ENCODE measurements at regions of chr10 and their contacts with region 1.

Region 1: GRCh38 chr10:26860443-26861204 is at the start of gene ABI1:
- DNase-seq: peak; percentile 94 to 99 (median 97)
- ATAC-seq: peak; percentile 91
- H3K4me3 ChIP-seq: peak within 1 kb of the TSS; percentile 74 to 98
- H3K4me3 Mint-ChIP-seq: peak within 1 kb of the TSS; percentile 95
- H3K27ac ChIP-seq: peak within 1 kb of the TSS; percentile 88 to 93
- H3K27ac Mint-ChIP-seq: peak within 1 kb of the TSS; percentile 97
- H3K4me1 ChIP-seq: peaks cover 30% of the 10 kb centered on the region
- H3K4me1 Mint-ChIP-seq: peaks cover 29% of the 10 kb centered on the region
- H3K27me3 ChIP-seq: peaks cover 0 to 2% of the 10 kb centered on the region in 2 experiments
- H3K27me3 Mint-ChIP-seq: peaks cover 3% of the 10 kb centered on the region
- CTCF ChIP-seq: no peak
- total RNA-seq, gene ABI1: 91.6 to 94.5 TPM

Region 2: DNA sequence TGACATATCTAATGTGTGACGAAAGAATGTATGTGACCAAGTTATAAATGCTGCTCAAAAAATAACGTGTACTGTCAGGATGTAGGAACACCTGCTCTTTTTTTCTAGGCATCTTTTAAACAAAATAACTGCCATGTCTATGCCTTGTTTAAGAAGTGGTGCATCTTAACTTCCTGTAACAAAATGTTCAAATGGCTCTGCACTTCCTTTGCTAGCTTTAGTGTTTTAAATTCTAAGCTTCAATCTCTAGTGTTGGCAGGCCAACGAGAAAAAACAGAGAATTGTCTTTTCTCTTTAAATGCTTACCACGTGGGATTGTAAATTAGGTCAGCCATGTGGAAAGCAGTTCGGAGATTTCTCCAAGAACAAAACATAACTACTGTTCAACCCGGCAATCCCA is 177.7 kb before region 1 on chr10:
- CTCF ChIA-PET with region 1: no interaction called
- POLR2A ChIA-PET with region 1: no interaction called
- intact Hi-C with region 1: loop called in 1 of 2 experiments (anchors 2 kb)
- DNase-seq: peak in 2 of 9 experiments; percentile 52 to 74
- ATAC-seq: peak; percentile 82
- H3K4me3 ChIP-seq: peak overlapping the region in 1 of 2 experiments; percentile 22
- H3K4me3 Mint-ChIP-seq: peak overlapping the region; percentile 35
- H3K27ac ChIP-seq: peak overlapping the region; percentile 56 to 61
- H3K27ac Mint-ChIP-seq: peak overlapping the region; percentile 92
- H3K4me1 ChIP-seq: peaks cover 36% of the 10 kb centered on the region
- H3K4me1 Mint-ChIP-seq: peaks cover 37% of the 10 kb centered on the region
- H3K27me3 ChIP-seq: no peaks in the 10 kb centered on the region
- H3K27me3 Mint-ChIP-seq: no peaks in the 10 kb centered on the region
- CTCF ChIP-seq: no peak

Region 3: DNA sequence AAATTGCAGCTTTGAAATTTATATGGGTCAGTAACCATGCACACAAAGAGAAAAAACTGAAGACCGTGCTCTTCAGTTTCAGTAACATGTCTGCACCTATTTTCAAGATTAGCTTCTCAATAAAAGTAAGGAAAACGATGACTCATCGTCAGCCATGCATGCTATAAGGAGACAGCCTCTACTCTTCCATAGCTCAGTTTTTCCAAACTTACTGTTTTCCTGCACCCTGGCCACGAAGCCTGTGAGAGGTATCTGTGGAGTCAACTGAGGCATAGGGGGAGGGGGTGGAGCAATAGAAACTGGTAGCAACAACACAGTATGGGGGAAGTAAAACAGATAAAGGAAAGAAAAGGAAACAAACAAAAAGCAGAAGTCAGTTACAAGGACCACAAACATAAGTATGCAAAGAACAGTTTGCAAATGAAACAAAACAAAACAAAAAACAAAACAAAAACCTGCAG is 105.2 kb before region 1 on chr10:
- CTCF ChIA-PET with region 1: no interaction called
- POLR2A ChIA-PET with region 1: interaction called, 3 read pairs
- intact Hi-C with region 1: loop called in 1 of 2 experiments (anchors 5 kb)
- DNase-seq: no peak
- ATAC-seq: no peak
- H3K4me3 ChIP-seq: no peak overlapping the region
- H3K4me3 Mint-ChIP-seq: no peak overlapping the region
- H3K27ac ChIP-seq: no peak overlapping the region
- H3K27ac Mint-ChIP-seq: peak overlapping the region; percentile 23
- H3K4me1 ChIP-seq: no peaks in the 10 kb centered on the region
- H3K4me1 Mint-ChIP-seq: peaks cover 2% of the 10 kb centered on the region
- H3K27me3 ChIP-seq: no peaks in the 10 kb centered on the region
- H3K27me3 Mint-ChIP-seq: no peaks in the 10 kb centered on the region
- CTCF ChIP-seq: no peak

Region 4: GRCh38 chr10:26846719-26847118 is 13.9 kb before region 1 on chr10:
- CTCF ChIA-PET with region 1: no interaction called
- POLR2A ChIA-PET with region 1: no interaction called
- intact Hi-C with region 1: loop called in 1 of 2 experiments (anchors 1 kb)
- DNase-seq: no peak
- ATAC-seq: no peak
- H3K4me3 ChIP-seq: no peak overlapping the region
- H3K4me3 Mint-ChIP-seq: peak overlapping the region; percentile 0
- H3K27ac ChIP-seq: no peak overlapping the region
- H3K27ac Mint-ChIP-seq: peak overlapping the region; percentile 25
- H3K4me1 ChIP-seq: peaks cover 39% of the 10 kb centered on the region
- H3K4me1 Mint-ChIP-seq: peaks cover 69% of the 10 kb centered on the region
- H3K27me3 ChIP-seq: no peaks in the 10 kb centered on the region
- H3K27me3 Mint-ChIP-seq: no peaks in the 10 kb centered on the region
- CTCF ChIP-seq: no peak

Region 5: DNA sequence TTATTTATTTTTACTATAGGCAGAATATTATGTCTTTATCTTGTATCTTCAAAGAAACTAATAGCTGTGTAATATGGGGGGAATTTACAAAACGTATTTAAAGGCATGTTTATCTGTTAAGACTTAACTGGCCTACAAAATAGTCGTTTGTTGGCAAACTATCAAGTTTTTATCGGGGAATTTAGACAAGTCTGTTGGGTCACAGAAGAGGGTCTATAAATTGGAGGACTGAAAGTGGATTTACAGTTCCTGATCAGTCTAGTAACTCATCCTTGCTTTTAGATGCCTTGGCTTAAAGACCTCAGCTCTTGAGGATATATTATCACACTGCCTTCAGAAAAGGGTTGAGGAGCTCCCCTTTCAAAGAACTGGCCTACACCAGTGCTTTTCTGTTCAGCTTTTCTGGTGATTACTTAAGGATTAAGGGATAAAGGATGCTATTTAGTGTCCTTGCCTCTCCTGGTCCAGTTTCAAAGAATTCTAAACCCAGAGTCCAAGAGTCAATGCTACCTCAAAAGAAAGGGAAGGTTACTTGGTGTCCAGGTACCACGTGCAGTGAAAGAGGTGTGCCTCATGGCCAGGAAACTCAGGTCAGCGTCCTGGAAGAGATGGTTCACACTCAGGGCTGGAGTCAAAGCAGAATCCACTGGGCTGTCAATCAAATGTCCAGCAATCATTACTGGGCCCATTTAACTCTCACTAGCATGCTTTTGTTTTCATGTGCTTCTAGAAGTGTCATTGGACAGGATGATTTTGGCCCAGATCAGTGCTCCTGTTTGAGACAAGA is 43.0 kb after region 1 on chr10:
- CTCF ChIA-PET with region 1: no interaction called
- POLR2A ChIA-PET with region 1: no interaction called
- intact Hi-C with region 1: no loop called
- DNase-seq: no peak
- ATAC-seq: no peak
- H3K4me3 ChIP-seq: no peak overlapping the region
- H3K4me3 Mint-ChIP-seq: no peak overlapping the region
- H3K27ac ChIP-seq: no peak overlapping the region
- H3K27ac Mint-ChIP-seq: no peak overlapping the region
- H3K4me1 ChIP-seq: no peaks in the 10 kb centered on the region
- H3K4me1 Mint-ChIP-seq: no peaks in the 10 kb centered on the region
- H3K27me3 ChIP-seq: no peaks in the 10 kb centered on the region
- H3K27me3 Mint-ChIP-seq: no peaks in the 10 kb centered on the region
- CTCF ChIP-seq: no peak

Region 6: GRCh38 chr10:27155066-27155754 is 294.6 kb after region 1 on chr10 and contains the start of gene MASTL:
- CTCF ChIA-PET with region 1: no interaction called
- POLR2A ChIA-PET with region 1: no interaction called
- intact Hi-C with region 1: loop called in 1 of 2 experiments (anchors 1 kb)
- DNase-seq: peak; percentile 90 to 98 (median 93)
- ATAC-seq: peak; percentile 82
- H3K4me3 ChIP-seq: peak within 1 kb of the TSS; percentile 84 to 98
- H3K4me3 Mint-ChIP-seq: peak within 1 kb of the TSS; percentile 99
- H3K27ac ChIP-seq: peak within 1 kb of the TSS; percentile 100
- H3K27ac Mint-ChIP-seq: peak within 1 kb of the TSS; percentile 100
- H3K4me1 ChIP-seq: peaks cover 27% of the 10 kb centered on the region
- H3K4me1 Mint-ChIP-seq: peaks cover 49% of the 10 kb centered on the region
- H3K27me3 ChIP-seq: no peaks in the 10 kb centered on the region
- H3K27me3 Mint-ChIP-seq: no peaks in the 10 kb centered on the region
- CTCF ChIP-seq: no peak
- total RNA-seq, gene MASTL: 33.4 to 33.6 TPM

Region 7: DNA sequence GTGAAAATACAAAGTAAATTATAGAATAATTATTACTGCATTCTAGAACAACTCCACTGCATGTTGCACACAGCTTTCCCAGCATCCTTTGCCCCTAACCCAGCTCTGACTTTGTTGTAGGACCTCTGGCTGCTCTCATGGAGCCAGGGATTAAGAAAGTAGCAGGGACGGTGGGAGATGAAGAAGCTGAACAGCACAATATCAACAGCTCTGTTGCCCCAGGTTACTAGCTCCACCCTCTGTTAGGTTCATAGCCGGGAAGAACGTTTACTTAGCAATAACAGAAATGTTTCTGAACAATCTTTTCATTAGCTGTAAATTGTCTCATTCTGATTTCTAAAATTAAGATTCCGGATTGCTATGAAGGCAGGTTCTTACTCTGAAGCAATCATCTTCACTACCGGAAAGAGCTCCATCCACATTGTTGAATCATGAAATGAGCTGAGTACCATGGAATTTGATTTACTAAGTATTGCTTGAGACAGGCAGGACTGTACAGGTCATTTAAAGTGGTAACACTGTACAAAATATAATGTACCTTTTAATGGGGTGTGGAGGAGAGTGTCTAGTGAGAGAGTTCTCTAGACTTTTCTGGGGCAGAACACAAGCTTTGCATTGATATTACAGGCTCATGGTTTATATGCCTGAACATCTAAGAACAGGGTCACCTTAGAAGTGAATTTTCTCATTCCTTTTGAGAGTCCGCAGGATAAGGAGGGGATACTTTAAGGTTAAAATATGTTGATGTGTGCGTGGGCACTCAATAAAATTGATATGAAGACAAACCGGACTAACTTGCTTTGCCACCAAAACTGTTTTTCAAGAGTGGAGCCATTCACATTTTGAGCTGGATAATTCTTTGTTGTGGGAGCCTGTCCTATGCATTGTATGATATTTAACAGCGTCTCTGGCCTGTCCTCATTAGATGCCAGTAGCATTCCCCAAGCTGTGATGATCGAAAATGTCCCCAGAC is 622.6 kb after region 1 on chr10:
- CTCF ChIA-PET with region 1: no interaction called
- POLR2A ChIA-PET with region 1: no interaction called
- intact Hi-C with region 1: no loop called
- DNase-seq: no peak
- ATAC-seq: no peak
- H3K4me3 ChIP-seq: no peak overlapping the region
- H3K4me3 Mint-ChIP-seq: no peak overlapping the region
- H3K27ac ChIP-seq: no peak overlapping the region
- H3K27ac Mint-ChIP-seq: no peak overlapping the region
- H3K4me1 ChIP-seq: no peaks in the 10 kb centered on the region
- H3K4me1 Mint-ChIP-seq: no peaks in the 10 kb centered on the region
- H3K27me3 ChIP-seq: no peaks in the 10 kb centered on the region
- H3K27me3 Mint-ChIP-seq: peaks cover 2% of the 10 kb centered on the region
- CTCF ChIP-seq: no peak

Region 8: GRCh38 chr10:28302638-28303488 is 1442.2 kb after region 1 on chr10 and contains the start of gene MPP7:
- CTCF ChIA-PET with region 1: no interaction called
- POLR2A ChIA-PET with region 1: no interaction called
- intact Hi-C with region 1: loop called in 1 of 2 experiments (anchors 2 kb)
- DNase-seq: peak; percentile 94 to 98 (median 96)
- ATAC-seq: peak; percentile 89
- H3K4me3 ChIP-seq: peak within 1 kb of the TSS; percentile 67 to 87
- H3K4me3 Mint-ChIP-seq: peak within 1 kb of the TSS; percentile 97
- H3K27ac ChIP-seq: peak within 1 kb of the TSS; percentile 52 to 71
- H3K27ac Mint-ChIP-seq: peak within 1 kb of the TSS; percentile 95
- H3K4me1 ChIP-seq: peaks cover 44% of the 10 kb centered on the region
- H3K4me1 Mint-ChIP-seq: peaks cover 65% of the 10 kb centered on the region
- H3K27me3 ChIP-seq: no peaks in the 10 kb centered on the region
- H3K27me3 Mint-ChIP-seq: no peaks in the 10 kb centered on the region
- CTCF ChIP-seq: peak; percentile 61
- total RNA-seq, gene MPP7: 22.5 to 23.1 TPM

Measured in CD8-positive, alpha-beta T cell (primary cell).